CD4-positive, alpha-beta T cell (primary cell): ENCODE measurements at regions of chr13 and their contacts with region 1.

Region 1: GRCh38 chr13:103078145-103078544 is 11.9 kb upstream of the SLC10A2 start:
- DNase-seq: no peak
- ATAC-seq: no peak
- H3K4me3 ChIP-seq: no peak overlapping the region
- H3K4me3 Mint-ChIP-seq: no peak overlapping the region
- H3K27ac ChIP-seq: no peak overlapping the region
- H3K27ac Mint-ChIP-seq: no peak overlapping the region
- H3K4me1 ChIP-seq: no peaks in the 10 kb centered on the region
- H3K4me1 Mint-ChIP-seq: no peaks in the 10 kb centered on the region
- H3K27me3 ChIP-seq: no peaks in the 10 kb centered on the region
- H3K27me3 Mint-ChIP-seq: peaks cover 8% of the 10 kb centered on the region
- CTCF ChIP-seq: no peak

Region 2: DNA sequence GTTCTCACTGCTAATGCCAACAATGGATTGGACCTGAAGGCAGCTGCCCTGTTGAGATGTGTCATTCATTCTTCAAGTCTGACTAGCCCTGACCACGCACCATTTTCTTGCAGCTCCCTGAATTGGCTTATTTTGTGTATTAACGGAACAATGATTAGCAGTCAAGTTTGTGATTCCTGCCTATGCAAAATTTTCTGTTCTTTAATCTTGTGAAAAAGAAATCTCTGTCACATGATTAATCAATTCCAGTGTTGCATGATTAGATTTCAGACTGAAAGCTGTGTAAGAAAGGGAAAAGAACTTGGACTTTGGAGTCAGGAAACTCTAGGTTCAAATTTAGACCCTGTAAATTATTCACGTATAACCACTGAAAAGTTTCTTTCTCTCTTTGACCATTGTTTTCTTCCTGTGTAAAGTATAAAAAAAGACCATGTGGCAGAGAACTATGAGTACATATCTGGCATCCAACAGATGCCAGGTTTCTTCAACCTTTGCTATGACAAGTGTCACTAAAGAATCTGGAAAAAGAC is 52.6 kb after region 1 on chr13:
- CTCF ChIA-PET with region 1: no interaction called
- POLR2A ChIA-PET with region 1: no interaction called
- intact Hi-C with region 1: no loop called
- DNase-seq: no peak
- ATAC-seq: no peak
- H3K4me3 ChIP-seq: no peak overlapping the region
- H3K4me3 Mint-ChIP-seq: no peak overlapping the region
- H3K27ac ChIP-seq: no peak overlapping the region
- H3K27ac Mint-ChIP-seq: no peak overlapping the region
- H3K4me1 ChIP-seq: no peaks in the 10 kb centered on the region
- H3K4me1 Mint-ChIP-seq: no peaks in the 10 kb centered on the region
- H3K27me3 ChIP-seq: no peaks in the 10 kb centered on the region
- H3K27me3 Mint-ChIP-seq: no peaks in the 10 kb centered on the region
- CTCF ChIP-seq: no peak

Region 3: DNA sequence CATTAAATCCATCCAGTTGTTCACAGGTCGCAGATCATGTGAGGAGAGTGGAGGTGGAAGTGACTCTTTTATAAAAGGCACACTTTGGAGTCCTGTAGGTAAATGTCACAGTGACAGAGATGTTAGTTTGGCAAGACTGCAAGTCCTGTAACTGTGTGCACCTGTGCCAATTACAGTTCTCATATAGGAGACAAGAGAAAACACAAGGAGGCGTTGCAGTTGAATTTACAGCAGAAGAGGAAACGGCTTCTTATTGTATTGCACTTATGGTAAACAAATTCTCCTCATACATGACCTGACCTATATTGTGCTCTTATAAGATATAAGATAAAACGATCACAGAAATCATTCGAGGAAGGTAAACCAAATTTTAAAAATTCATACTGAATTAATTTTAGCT is 720.9 kb after region 1 on chr13:
- CTCF ChIA-PET with region 1: no interaction called
- POLR2A ChIA-PET with region 1: no interaction called
- intact Hi-C with region 1: no loop called
- DNase-seq: no peak
- ATAC-seq: no peak
- H3K4me3 ChIP-seq: no peak overlapping the region
- H3K4me3 Mint-ChIP-seq: no peak overlapping the region
- H3K27ac ChIP-seq: no peak overlapping the region
- H3K27ac Mint-ChIP-seq: no peak overlapping the region
- H3K4me1 ChIP-seq: no peaks in the 10 kb centered on the region
- H3K4me1 Mint-ChIP-seq: no peaks in the 10 kb centered on the region
- H3K27me3 ChIP-seq: no peaks in the 10 kb centered on the region
- H3K27me3 Mint-ChIP-seq: no peaks in the 10 kb centered on the region
- CTCF ChIP-seq: no peak

Region 4: DNA sequence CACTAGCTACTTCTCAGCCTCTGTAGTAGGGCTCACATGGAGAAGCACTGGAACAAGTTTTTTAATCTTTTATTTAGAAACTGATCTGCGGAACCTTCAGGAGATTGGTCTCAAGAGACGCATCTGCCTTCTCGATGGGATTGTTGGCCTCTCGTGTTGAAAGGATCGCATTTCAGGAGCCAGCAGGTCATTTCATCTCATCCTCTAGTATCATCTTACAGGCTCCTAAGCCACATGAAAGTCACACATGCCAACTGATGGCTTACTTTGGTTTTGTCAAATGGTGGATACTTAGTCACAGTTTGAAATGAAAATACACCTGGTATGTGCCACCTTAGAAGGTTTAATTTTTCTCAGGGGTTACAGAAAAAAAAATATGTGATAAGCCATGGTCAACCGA is 1753.7 kb after region 1 on chr13:
- CTCF ChIA-PET with region 1: no interaction called
- POLR2A ChIA-PET with region 1: no interaction called
- intact Hi-C with region 1: loop called in 1 of 2 experiments (anchors 5 kb)
- DNase-seq: no peak
- ATAC-seq: no peak
- H3K4me3 ChIP-seq: no peak overlapping the region
- H3K4me3 Mint-ChIP-seq: no peak overlapping the region
- H3K27ac ChIP-seq: no peak overlapping the region
- H3K27ac Mint-ChIP-seq: no peak overlapping the region
- H3K4me1 ChIP-seq: no peaks in the 10 kb centered on the region
- H3K4me1 Mint-ChIP-seq: no peaks in the 10 kb centered on the region
- H3K27me3 ChIP-seq: no peaks in the 10 kb centered on the region
- H3K27me3 Mint-ChIP-seq: no peaks in the 10 kb centered on the region
- CTCF ChIP-seq: no peak